Psoas muscle (tissue), 8 donors: ENCODE measurements at regions of chr3 and their contacts with region 1.

Region 1: DNA sequence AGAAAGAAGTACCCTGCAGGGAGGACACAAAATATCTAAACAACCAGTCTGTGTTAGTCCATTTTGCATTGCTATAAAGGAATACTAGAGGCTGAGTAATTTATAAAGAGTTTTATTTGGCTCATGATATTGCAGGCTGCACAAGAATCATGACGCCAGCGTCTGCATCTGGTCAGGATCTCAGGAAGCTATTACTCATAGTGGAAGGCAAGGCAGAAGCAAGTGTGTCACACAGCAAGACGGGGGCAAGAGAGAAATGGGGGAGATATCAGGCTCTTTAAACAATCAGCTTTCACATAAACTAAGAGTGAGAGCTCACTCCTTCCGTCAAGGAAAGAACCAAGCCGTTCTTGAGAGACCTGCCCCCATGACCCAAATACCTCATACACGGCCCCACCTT is 614.8 kb downstream of the ZIC1 start:
- DNase-seq: no peak
- ATAC-seq: no peak
- H3K4me3 ChIP-seq: no peak overlapping the region
- H3K27ac ChIP-seq: no peak overlapping the region
- H3K4me1 ChIP-seq: no peaks in the 10 kb centered on the region
- H3K27me3 ChIP-seq: no peaks in the 10 kb centered on the region
- CTCF ChIP-seq: no peak

Region 2: DNA sequence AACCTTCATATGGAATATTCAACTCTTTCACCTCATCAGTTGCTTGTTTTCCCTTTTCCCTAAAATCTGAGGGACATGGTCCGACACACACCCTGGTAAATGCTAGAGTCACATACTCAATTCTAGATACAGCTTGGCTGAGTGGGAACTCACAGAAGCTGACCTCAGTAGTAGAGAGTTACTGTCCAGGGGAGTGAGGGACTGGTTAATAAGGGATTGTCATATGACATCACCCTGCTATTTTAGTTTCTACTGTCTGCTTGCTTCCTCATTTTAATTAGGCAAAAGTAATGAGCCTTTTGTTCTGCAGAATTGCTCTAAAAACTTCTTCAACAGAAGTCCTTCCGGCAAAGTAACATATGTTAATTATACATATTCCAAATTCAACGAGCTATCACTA is 862.2 kb before region 1 on chr3:
- intact Hi-C with region 1: loop called in 1 of 2 experiments (anchors 5 kb)
- DNase-seq: no peak
- ATAC-seq: no peak
- H3K4me3 ChIP-seq: no peak overlapping the region
- H3K27ac ChIP-seq: no peak overlapping the region
- H3K4me1 ChIP-seq: no peaks in the 10 kb centered on the region
- H3K27me3 ChIP-seq: no peaks in the 10 kb centered on the region
- CTCF ChIP-seq: no peak